CD8-positive, alpha-beta T cell (primary cell): ENCODE measurements at regions of chr3 and their contacts with region 1.

Region 1: DNA sequence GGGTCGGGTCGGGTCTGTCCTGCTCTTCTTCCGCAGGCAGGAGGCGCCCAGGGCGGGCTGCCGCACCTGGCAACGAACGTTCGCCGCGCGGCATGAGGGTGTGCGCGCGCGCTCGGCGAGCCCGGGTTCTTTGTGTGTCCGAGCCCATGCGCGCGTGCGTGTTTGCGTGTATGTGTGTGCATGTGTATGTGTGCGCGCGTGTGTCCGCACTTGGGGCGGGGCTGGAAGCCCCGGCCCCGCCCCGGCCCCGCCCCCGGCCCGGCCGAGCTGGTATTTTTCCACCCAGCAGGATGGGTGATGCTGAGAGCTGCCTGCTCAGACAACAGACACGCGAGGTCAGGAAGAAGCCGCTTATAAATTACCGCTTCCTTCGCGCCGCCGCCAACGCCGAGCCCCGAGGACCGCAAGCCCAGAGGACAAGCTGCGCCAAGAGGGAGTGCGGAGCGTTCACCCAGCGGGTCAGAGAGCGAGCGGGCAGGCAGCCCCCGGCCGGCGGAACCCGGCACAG is at the start of gene SLC6A6:
- DNase-seq: peak; percentile 87 to 98 (median 95)
- ATAC-seq: peak; percentile 79
- H3K4me3 ChIP-seq: peak within 1 kb of the TSS; percentile 72 to 85
- H3K4me3 Mint-ChIP-seq: peak within 1 kb of the TSS; percentile 97
- H3K27ac ChIP-seq: peak within 1 kb of the TSS; percentile 70 to 91
- H3K27ac Mint-ChIP-seq: peak within 1 kb of the TSS; percentile 96
- H3K4me1 ChIP-seq: peaks cover 34% of the 10 kb centered on the region
- H3K4me1 Mint-ChIP-seq: peaks cover 46% of the 10 kb centered on the region
- H3K27me3 ChIP-seq: no peaks in the 10 kb centered on the region
- H3K27me3 Mint-ChIP-seq: no peaks in the 10 kb centered on the region
- CTCF ChIP-seq: peak; percentile 46
- total RNA-seq, gene SLC6A6: 25.8 to 30.9 TPM

Region 2: DNA sequence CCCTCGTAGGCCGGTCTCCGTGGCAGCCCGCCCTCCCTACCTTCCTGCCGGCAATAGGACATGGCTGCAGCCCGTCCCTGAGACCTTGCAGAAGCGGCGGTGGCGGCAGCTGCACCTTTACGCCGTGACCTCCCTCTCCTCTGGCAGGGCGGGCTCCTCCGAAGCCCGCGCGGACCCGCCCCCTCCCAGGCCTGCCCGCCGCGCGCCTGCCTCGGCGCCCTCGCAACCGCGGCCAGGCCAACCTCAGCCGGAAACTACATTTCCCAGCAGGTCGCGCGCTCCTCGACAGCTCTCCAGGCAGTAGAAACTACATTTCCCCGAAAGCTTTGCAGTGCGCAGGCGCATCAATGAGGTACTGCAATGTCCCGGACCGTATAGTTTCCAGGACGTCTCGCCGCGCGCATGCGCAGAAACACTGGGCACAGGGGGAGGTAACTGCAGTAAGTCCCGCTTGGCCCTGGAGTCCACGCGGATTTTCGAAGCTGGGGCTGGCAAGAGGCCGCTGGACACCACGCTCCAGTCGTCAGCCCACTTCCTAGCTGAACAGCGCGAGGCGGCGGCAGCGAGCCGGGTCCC is 277.7 kb before region 1 on chr3 and contains the starts of genes CHCHD4 and TMEM43:
- CTCF ChIA-PET with region 1: no interaction called
- POLR2A ChIA-PET with region 1: no interaction called
- intact Hi-C with region 1: loop called in 1 of 2 experiments (anchors 2 kb)
- DNase-seq: peak; percentile 95 to 100 (median 98)
- ATAC-seq: peak; percentile 87
- H3K4me3 ChIP-seq: peak within 1 kb of the TSS; percentile 95 to 100
- H3K4me3 Mint-ChIP-seq: peak within 1 kb of the TSS; percentile 96
- H3K27ac ChIP-seq: peak within 1 kb of the TSS; percentile 89 to 92
- H3K27ac Mint-ChIP-seq: peak within 1 kb of the TSS; percentile 93
- H3K4me1 ChIP-seq: peaks cover 30% of the 10 kb centered on the region
- H3K4me1 Mint-ChIP-seq: peaks cover 56% of the 10 kb centered on the region
- H3K27me3 ChIP-seq: no peaks in the 10 kb centered on the region
- H3K27me3 Mint-ChIP-seq: no peaks in the 10 kb centered on the region
- CTCF ChIP-seq: no peak
- total RNA-seq, gene CHCHD4: 0.71 to 1.7 TPM
- total RNA-seq, gene TMEM43: 20.1 to 24.3 TPM

Region 3: DNA sequence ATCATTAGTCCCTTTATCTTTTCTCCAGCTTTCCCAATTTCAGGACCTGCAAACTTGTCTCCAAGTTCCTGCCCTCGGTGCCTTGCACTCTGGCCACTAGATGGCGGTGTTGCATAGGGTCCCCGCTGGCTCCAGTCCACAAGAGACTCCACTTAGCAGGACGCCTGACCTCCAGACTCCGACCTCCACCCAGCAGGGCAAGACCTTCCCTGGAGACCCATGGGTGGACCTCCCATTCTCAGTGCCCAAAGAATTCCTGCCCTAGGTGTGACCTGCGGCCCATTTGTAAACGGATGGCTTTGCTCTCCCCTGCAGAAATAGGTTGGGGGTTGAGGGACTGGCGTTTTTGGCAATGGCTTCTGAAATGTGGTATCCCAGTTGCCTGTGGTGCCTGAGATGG is 141.1 kb before region 1 on chr3:
- CTCF ChIA-PET with region 1: interaction called, 5 read pairs
- POLR2A ChIA-PET with region 1: no interaction called
- intact Hi-C with region 1: loop called (anchors 1 to 5 kb)
- DNase-seq: peak; percentile 50 to 88 (median 77)
- ATAC-seq: no peak
- H3K4me3 ChIP-seq: no peak overlapping the region
- H3K4me3 Mint-ChIP-seq: no peak overlapping the region
- H3K27ac ChIP-seq: no peak overlapping the region
- H3K27ac Mint-ChIP-seq: no peak overlapping the region
- H3K4me1 ChIP-seq: no peaks in the 10 kb centered on the region
- H3K4me1 Mint-ChIP-seq: no peaks in the 10 kb centered on the region
- H3K27me3 ChIP-seq: no peaks in the 10 kb centered on the region
- H3K27me3 Mint-ChIP-seq: peaks cover 2% of the 10 kb centered on the region
- CTCF ChIP-seq: peak; percentile 100

Region 4: GRCh38 chr3:14431892-14432834 is 29.8 kb after region 1 on chr3:
- CTCF ChIA-PET with region 1: interaction called, 12 read pairs
- POLR2A ChIA-PET with region 1: interaction called, 81 read pairs
- intact Hi-C with region 1: loop called (anchors 1 kb)
- DNase-seq: peak; percentile 85 to 97 (median 95)
- ATAC-seq: peak; percentile 83
- H3K4me3 ChIP-seq: peak overlapping the region in 1 of 2 experiments; percentile 27
- H3K4me3 Mint-ChIP-seq: peak overlapping the region; percentile 75
- H3K27ac ChIP-seq: peak overlapping the region; percentile 66 to 95
- H3K27ac Mint-ChIP-seq: peak overlapping the region; percentile 99
- H3K4me1 ChIP-seq: peaks cover 75% of the 10 kb centered on the region
- H3K4me1 Mint-ChIP-seq: peaks cover 85% of the 10 kb centered on the region
- H3K27me3 ChIP-seq: no peaks in the 10 kb centered on the region
- H3K27me3 Mint-ChIP-seq: no peaks in the 10 kb centered on the region
- CTCF ChIP-seq: no peak

Region 5: DNA sequence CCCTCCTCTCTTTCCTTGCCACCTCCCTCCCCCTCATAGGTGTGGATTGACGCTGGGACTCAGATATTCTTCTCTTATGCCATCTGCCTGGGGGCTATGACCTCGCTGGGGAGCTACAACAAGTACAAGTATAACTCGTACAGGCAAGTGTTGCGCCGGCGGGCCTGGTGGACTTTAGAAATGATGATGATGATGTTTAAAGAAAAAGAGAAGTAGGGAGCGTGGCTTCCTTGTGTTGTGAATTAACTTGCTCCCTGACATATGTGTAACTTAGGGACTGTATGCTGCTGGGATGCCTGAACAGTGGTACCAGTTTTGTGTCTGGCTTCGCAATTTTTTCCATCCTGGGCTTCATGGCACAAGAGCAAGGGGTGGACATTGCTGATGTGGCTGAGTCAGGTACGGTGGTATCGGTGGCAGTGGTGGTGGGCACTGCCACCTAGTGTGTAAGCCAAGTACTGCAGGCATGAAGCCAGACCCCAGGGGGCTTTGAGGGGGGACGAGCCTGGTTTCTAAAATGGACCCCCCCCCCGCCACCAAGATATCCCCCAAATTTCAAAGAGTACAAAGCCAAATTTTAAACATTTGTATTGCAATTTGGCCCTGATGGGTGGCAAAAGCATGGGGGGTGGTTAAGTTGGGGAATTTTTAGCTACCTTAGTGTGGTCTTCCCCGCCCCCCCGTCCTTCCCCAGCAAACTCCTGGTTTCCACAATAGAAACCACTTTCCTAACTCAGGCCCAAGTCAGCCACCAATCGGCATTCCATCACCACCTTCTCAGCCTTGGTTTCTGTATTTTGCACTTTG is 65.7 kb after region 1 on chr3:
- CTCF ChIA-PET with region 1: interaction called, 56 read pairs
- POLR2A ChIA-PET with region 1: interaction called, 6 read pairs
- intact Hi-C with region 1: loop called (anchors 1 kb)
- DNase-seq: peak; percentile 17 to 69 (median 48)
- ATAC-seq: peak; percentile 84
- H3K4me3 ChIP-seq: no peak overlapping the region
- H3K4me3 Mint-ChIP-seq: no peak overlapping the region
- H3K27ac ChIP-seq: no peak overlapping the region
- H3K27ac Mint-ChIP-seq: no peak overlapping the region
- H3K4me1 ChIP-seq: no peaks in the 10 kb centered on the region
- H3K4me1 Mint-ChIP-seq: no peaks in the 10 kb centered on the region
- H3K27me3 ChIP-seq: no peaks in the 10 kb centered on the region
- H3K27me3 Mint-ChIP-seq: no peaks in the 10 kb centered on the region
- CTCF ChIP-seq: peak; percentile 87